ENCODE measurements at regions of chr1 and their contacts with region 1.

Region 1: GRCh38 chr1:58515794-58516401 is 30.6 kb downstream of the OMA1 start:
- DNase-seq: peak; percentile 21
- H3K4me3 ChIP-seq: no peak overlapping the region
- H3K27ac ChIP-seq: peak overlapping the region in 1 of 4 donors; percentile 23
- H3K4me1 ChIP-seq: peaks cover 0 to 5% (median 0%) of the 10 kb centered on the region in 4 donors
- H3K27me3 ChIP-seq: no peaks in the 10 kb centered on the region
- CTCF ChIP-seq: peak; percentile 61 to 76 (median 72)
- EP300 ChIP-seq: no peak
- POLR2A ChIP-seq: no peak

Region 2: DNA sequence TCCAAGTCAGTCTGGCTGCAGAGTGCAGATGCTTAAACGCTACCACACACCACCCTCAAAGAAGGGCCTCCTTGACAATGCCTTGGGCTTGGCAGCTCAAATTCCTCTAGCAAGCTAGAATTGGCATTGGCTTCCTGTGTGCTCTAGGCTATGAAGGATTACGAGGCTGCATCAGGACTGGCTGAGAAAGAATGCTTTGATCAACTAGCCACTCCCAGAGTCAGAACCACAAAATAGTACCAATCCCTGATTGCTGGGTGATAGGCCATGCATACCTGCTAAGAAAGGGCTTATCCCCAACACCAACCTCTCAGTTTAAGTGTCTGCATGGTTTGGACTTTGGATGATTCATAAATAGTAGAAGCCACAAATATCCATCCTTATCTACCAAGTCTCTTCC is 474.3 kb before region 1 on chr1:
- in situ Hi-C with region 1: no loop called
- intact Hi-C with region 1: no loop called
- DNase-seq: no peak
- H3K4me3 ChIP-seq: no peak overlapping the region
- H3K27ac ChIP-seq: no peak overlapping the region
- H3K4me1 ChIP-seq: no peaks in the 10 kb centered on the region
- H3K27me3 ChIP-seq: no peaks in the 10 kb centered on the region
- CTCF ChIP-seq: no peak
- EP300 ChIP-seq: no peak
- POLR2A ChIP-seq: no peak

Region 3: GRCh38 chr1:58528518-58528917 is 12.6 kb after region 1 on chr1:
- in situ Hi-C with region 1: no loop called
- intact Hi-C with region 1: no loop called
- DNase-seq: no peak
- H3K4me3 ChIP-seq: no peak overlapping the region
- H3K27ac ChIP-seq: no peak overlapping the region
- H3K4me1 ChIP-seq: no peaks in the 10 kb centered on the region
- H3K27me3 ChIP-seq: no peaks in the 10 kb centered on the region
- CTCF ChIP-seq: no peak
- EP300 ChIP-seq: no peak
- POLR2A ChIP-seq: no peak

Region 4: DNA sequence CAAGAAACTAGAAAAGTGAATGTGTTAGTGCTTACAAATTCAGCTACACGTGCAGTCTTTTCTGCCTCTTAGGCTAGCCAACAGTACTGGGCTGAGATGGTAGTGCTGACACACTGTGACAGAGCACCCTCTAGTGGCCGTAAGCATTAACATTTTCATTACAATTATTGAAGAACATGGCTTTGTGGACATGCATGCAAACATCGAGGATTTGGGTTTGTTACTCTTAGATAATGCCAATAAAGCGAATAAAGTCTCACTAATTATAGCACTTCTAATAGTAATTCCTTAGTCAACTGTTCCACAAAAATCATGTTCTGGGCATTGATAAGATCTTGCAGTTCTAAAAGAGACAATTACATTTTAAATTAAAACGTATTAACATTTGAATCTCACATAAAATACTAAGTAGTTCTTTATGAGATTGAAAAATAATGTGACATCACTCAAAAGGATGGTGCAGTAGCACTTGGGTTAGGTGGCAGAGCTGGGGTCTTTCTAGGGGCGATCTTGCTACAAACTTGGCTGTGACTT is 136.8 kb after region 1 on chr1:
- in situ Hi-C with region 1: loop called (anchors 10 kb)
- intact Hi-C with region 1: loop called (anchors 2 kb)
- DNase-seq: peak; percentile 48
- H3K4me3 ChIP-seq: no peak overlapping the region
- H3K27ac ChIP-seq: no peak overlapping the region
- H3K4me1 ChIP-seq: peaks cover 0 to 4% (median 0%) of the 10 kb centered on the region in 4 donors
- H3K27me3 ChIP-seq: no peaks in the 10 kb centered on the region
- CTCF ChIP-seq: peak; percentile 74 to 85 (median 75)
- EP300 ChIP-seq: no peak
- POLR2A ChIP-seq: no peak

Region 5: DNA sequence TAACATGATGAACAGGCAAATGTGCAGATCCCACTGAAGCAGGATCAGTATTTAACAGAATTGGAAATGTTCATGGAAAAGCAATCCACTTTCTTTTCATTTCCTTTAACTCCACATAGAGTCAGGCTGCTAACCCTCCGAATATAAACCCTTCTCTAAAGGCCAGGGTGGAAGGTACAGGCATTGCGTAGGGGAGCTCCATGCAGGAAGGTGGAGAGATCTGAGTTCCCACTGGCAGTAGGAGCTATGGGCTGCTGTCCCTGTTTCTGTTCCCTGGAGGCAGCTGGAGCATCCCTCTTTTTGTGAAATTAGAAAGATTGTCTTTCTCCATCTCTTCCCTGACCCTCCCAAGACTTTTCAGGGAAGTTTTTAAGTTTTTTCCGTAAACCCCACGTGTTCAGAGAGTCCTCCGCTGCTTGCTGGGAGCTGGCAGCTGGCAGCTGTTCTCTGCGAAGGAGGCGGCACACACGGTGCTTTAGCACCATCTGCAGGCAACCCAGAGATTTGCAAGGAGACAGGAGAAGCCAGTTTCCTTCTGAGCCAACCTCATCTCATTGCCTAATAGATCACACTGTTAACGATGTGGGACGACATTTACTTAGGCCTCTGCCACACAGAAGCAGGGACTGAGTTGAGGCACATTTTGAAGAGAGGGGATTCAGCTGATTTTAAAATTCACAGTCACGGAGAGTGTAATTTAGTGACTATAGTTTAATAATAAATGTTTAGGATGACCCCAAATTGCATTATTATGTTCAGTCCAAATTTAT is 1243.4 kb after region 1 on chr1:
- in situ Hi-C with region 1: loop called in 1 of 4 experiments (anchors 25 kb)
- intact Hi-C with region 1: no loop called
- DNase-seq: peak; percentile 82
- H3K4me3 ChIP-seq: peak overlapping the region in 2 of 4 donors; percentile 2 to 15
- H3K27ac ChIP-seq: peak overlapping the region; percentile 46 to 70 (median 58)
- H3K4me1 ChIP-seq: peaks cover 4 to 9% (median 6%) of the 10 kb centered on the region in 4 donors
- H3K27me3 ChIP-seq: no peaks in the 10 kb centered on the region
- CTCF ChIP-seq: peak; percentile 91 to 96 (median 92)
- EP300 ChIP-seq: no peak
- POLR2A ChIP-seq: no peak

Measured in transverse colon (tissue), 4 donors.